Activated naive CD4-positive, alpha-beta T cell treated with anti-CD3 and anti-CD28 coated beads, Interleukin-2, amount 10 ng/mL, durations not matched to agents 7 days and 5 days (primary cell): ENCODE measurements at regions of chr1 and their contacts with region 1.

Region 1: DNA sequence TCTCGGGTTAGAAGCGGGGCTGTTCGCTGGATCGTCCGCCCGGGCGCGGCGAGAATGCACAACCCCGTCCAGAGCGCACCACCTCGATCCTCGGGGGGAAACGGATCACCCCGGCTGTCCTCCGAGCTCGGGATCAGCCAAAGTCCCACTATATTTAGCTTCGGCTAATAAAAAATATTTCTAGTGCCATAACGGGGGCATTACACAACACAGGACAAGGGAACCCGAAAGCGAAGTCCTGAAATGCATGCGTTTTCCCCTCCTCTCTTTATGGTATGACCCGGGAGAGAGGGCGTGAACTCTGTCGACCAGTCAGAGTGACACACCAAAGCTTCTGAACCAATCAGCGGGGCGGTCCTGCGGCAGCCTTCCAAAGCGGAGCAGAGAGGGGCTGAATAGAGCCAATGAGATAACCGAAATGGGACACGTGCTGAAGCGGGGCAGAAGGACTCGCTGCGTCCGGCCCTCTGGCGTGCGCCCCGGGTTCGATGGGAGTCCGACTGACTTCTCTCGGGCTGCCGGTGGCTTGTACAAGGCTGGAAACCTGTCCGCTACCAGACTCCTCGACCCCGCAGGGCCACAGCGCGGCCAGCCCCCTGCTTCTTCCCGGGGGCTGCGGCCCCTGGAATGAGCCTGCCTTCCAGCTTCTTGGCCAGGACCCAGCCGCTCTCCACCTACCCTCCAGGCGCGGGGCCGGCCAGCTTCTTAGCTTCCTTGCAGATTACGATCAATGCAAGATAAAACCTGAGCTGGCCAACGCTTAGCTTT is at the start of gene ALDH4A1:
- DNase-seq: peak; percentile 97
- H3K4me3 Mint-ChIP-seq: peak within 1 kb of the TSS; percentile 95
- H3K27ac Mint-ChIP-seq: peak within 1 kb of the TSS; percentile 95
- H3K4me1 Mint-ChIP-seq: peaks cover 45% of the 10 kb centered on the region
- H3K27me3 Mint-ChIP-seq: no peaks in the 10 kb centered on the region

Region 2: GRCh38 chr1:18322368-18323032 is 580.2 kb before region 1 on chr1:
- CTCF ChIA-PET with region 1: no interaction called
- DNase-seq: no peak
- H3K4me3 Mint-ChIP-seq: no peak overlapping the region
- H3K27ac Mint-ChIP-seq: no peak overlapping the region
- H3K4me1 Mint-ChIP-seq: no peaks in the 10 kb centered on the region
- H3K27me3 Mint-ChIP-seq: peaks cover 11% of the 10 kb centered on the region

Region 3: DNA sequence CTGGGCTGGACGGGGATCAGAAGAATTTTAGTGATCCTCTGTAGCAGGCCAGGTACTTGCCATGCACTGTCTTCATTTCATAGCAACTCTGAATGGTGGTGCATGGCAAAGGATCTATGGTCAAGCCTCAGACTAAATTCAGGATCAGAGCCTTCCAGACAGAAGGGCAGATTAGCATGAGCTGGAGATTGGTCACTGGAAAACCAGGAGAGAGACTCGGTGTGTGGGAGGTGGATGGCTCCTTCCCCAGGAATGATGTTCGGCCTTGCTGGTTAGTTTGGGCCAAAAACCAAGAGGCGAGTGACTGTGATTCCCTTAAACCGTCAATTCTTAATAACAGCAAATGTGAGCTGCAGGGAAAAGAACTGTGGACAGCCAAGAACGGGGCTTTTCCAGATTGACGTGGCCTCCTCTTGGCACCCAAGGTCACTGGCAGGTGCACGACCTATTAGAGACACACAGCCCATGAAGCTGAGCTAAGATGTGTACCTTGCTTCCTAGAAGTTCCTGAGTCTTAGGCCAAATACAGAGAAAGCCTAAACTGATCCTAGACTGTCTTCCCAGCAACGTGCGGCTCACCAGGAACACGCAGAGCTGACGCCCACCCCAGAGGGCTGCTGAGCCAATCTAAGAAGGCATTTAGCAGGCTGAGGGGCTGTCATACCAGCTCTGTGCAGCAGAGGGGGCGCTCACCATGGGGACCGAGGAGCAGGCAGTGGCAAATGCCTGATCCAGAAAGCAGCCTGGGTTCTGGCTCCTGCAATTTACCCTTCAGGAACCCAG is 18.9 kb before region 1 on chr1:
- CTCF ChIA-PET with region 1: interaction called, 10 read pairs
- DNase-seq: peak; percentile 83
- H3K4me3 Mint-ChIP-seq: no peak overlapping the region
- H3K27ac Mint-ChIP-seq: no peak overlapping the region
- H3K4me1 Mint-ChIP-seq: no peaks in the 10 kb centered on the region
- H3K27me3 Mint-ChIP-seq: no peaks in the 10 kb centered on the region

Region 4: GRCh38 chr1:18949686-18950400 is 47.1 kb after region 1 on chr1:
- CTCF ChIA-PET with region 1: interaction called, 13 read pairs
- DNase-seq: peak; percentile 41
- H3K4me3 Mint-ChIP-seq: peak overlapping the region; percentile 77
- H3K27ac Mint-ChIP-seq: peak overlapping the region; percentile 93
- H3K4me1 Mint-ChIP-seq: peaks cover 96% of the 10 kb centered on the region
- H3K27me3 Mint-ChIP-seq: peaks cover 19% of the 10 kb centered on the region

Region 5: DNA sequence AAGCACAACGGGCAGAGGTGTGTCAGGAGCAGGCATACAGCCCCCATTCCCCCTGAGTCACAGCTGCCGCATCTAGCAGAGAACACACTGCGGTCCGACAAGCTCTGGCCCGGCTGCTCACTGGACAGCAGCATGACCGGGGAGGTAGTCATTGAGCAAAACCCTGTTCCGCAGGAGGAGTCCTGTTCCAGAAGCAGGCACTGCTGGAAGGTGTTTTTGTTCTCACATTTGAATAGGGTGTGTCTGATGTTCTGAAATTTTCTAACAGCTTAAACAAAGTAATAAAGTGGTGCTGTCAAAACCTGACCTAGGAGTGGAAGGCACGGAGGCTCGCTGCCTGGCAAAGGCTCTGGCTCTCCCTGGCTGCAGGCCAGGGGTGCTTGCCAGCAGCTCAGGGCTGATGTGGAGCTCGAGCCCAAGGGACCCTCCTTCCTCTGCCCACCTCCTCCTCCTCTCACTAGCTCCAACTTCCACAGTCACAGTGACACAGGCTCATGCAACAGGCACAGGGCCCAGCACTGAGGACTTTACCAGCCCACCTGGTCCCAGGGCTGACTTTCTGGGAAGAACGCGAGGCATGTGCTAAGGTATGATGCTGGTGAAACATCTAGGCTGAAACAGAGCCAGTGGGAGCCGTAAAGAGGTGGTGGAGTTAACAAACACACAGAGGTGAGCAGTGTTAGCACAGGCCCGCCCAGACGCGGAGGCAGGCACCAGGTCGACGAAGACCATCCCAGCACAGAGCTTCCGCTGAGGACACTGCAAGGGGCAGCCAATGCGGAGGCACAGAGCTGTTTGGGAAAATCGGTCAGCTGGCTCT is 172.4 kb after region 1 on chr1:
- CTCF ChIA-PET with region 1: interaction called, 16 read pairs
- DNase-seq: no peak
- H3K4me3 Mint-ChIP-seq: peak overlapping the region; percentile 2
- H3K27ac Mint-ChIP-seq: peak overlapping the region; percentile 88
- H3K4me1 Mint-ChIP-seq: peaks cover 37% of the 10 kb centered on the region
- H3K27me3 Mint-ChIP-seq: peaks cover 19% of the 10 kb centered on the region

Region 6: GRCh38 chr1:19113697-19114092 is 211.0 kb after region 1 on chr1:
- CTCF ChIA-PET with region 1: interaction called, 37 read pairs
- DNase-seq: peak; percentile 72
- H3K4me3 Mint-ChIP-seq: no peak overlapping the region
- H3K27ac Mint-ChIP-seq: no peak overlapping the region
- H3K4me1 Mint-ChIP-seq: no peaks in the 10 kb centered on the region
- H3K27me3 Mint-ChIP-seq: no peaks in the 10 kb centered on the region